Activated naive CD4-positive, alpha-beta T cell treated with anti-CD3 and anti-CD28 coated beads for 36 hours (primary cell): ENCODE measurements at regions of chr3 and their contacts with region 1.

Region 1: GRCh38 chr3:157088601-157089454 is 71.1 kb downstream of the CCNL1 start:
- DNase-seq: peak; percentile 94
- H3K4me3 Mint-ChIP-seq: peak overlapping the region; percentile 73
- H3K27ac Mint-ChIP-seq: peak overlapping the region; percentile 96
- H3K4me1 Mint-ChIP-seq: peaks cover 51% of the 10 kb centered on the region
- H3K27me3 Mint-ChIP-seq: peaks cover 4% of the 10 kb centered on the region

Region 2: GRCh38 chr3:156483961-156484787 is 604.7 kb before region 1 on chr3:
- CTCF ChIA-PET with region 1: no interaction called
- intact Hi-C with region 1: loop called (anchors 1 kb)
- DNase-seq: peak; percentile 70
- H3K4me3 Mint-ChIP-seq: peak overlapping the region; percentile 51
- H3K27ac Mint-ChIP-seq: peak overlapping the region; percentile 81
- H3K4me1 Mint-ChIP-seq: peaks cover 42% of the 10 kb centered on the region
- H3K27me3 Mint-ChIP-seq: no peaks in the 10 kb centered on the region

Region 3: GRCh38 chr3:156605686-156606605 is 482.9 kb before region 1 on chr3:
- CTCF ChIA-PET with region 1: no interaction called
- intact Hi-C with region 1: loop called (anchors 5 kb)
- DNase-seq: no peak
- H3K4me3 Mint-ChIP-seq: peak overlapping the region; percentile 68
- H3K27ac Mint-ChIP-seq: no peak overlapping the region
- H3K4me1 Mint-ChIP-seq: peaks cover 19% of the 10 kb centered on the region
- H3K27me3 Mint-ChIP-seq: peaks cover 31% of the 10 kb centered on the region

Region 4: GRCh38 chr3:156826144-156826895 is 262.5 kb before region 1 on chr3 and contains the start of gene LEKR1:
- CTCF ChIA-PET with region 1: no interaction called
- intact Hi-C with region 1: loop called (anchors 1 kb)
- DNase-seq: peak; percentile 69
- H3K4me3 Mint-ChIP-seq: peak within 1 kb of the TSS; percentile 93
- H3K27ac Mint-ChIP-seq: peak within 1 kb of the TSS; percentile 92
- H3K4me1 Mint-ChIP-seq: peaks cover 16% of the 10 kb centered on the region
- H3K27me3 Mint-ChIP-seq: no peaks in the 10 kb centered on the region
- total RNA-seq, gene LEKR1: 0.43 to 0.77 TPM

Region 5: GRCh38 chr3:157045238-157045850 is 43.5 kb before region 1 on chr3:
- CTCF ChIA-PET with region 1: no interaction called
- intact Hi-C with region 1: no loop called
- DNase-seq: no peak
- H3K4me3 Mint-ChIP-seq: no peak overlapping the region
- H3K27ac Mint-ChIP-seq: no peak overlapping the region
- H3K4me1 Mint-ChIP-seq: no peaks in the 10 kb centered on the region
- H3K27me3 Mint-ChIP-seq: peaks cover 6% of the 10 kb centered on the region

Region 6: GRCh38 chr3:157104928-157105652 is 16.3 kb after region 1 on chr3:
- CTCF ChIA-PET with region 1: interaction called, 12 read pairs
- intact Hi-C with region 1: loop called (anchors 1 kb)
- DNase-seq: no peak
- H3K4me3 Mint-ChIP-seq: no peak overlapping the region
- H3K27ac Mint-ChIP-seq: no peak overlapping the region
- H3K4me1 Mint-ChIP-seq: peaks cover 21% of the 10 kb centered on the region
- H3K27me3 Mint-ChIP-seq: no peaks in the 10 kb centered on the region

Region 7: DNA sequence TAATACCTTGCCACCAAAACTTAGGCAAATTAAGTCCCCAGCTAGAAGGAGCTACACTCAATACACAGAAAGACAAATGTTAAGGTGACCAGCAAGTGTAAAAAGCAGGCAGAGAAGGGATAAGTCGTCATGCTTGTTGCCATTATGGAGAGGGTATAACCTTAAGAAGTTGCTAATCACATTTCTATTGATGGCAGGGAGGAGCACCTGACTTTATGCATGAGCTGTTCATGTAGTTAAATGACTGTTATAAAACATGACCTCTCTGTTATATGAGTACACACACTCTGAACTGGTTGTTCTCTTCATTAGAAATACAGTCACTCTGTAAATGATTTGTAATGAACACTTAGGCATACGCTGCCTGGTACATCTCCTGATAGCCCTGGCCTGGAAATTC is 77.7 kb after region 1 on chr3:
- CTCF ChIA-PET with region 1: no interaction called
- intact Hi-C with region 1: no loop called
- DNase-seq: no peak
- H3K4me3 Mint-ChIP-seq: no peak overlapping the region
- H3K27ac Mint-ChIP-seq: no peak overlapping the region
- H3K4me1 Mint-ChIP-seq: peaks cover 17% of the 10 kb centered on the region
- H3K27me3 Mint-ChIP-seq: no peaks in the 10 kb centered on the region

Region 8: GRCh38 chr3:157226173-157226847 is 137.5 kb after region 1 on chr3:
- CTCF ChIA-PET with region 1: no interaction called
- intact Hi-C with region 1: no loop called
- DNase-seq: no peak
- H3K4me3 Mint-ChIP-seq: no peak overlapping the region
- H3K27ac Mint-ChIP-seq: no peak overlapping the region
- H3K4me1 Mint-ChIP-seq: peaks cover 7% of the 10 kb centered on the region
- H3K27me3 Mint-ChIP-seq: no peaks in the 10 kb centered on the region

Region 9: DNA sequence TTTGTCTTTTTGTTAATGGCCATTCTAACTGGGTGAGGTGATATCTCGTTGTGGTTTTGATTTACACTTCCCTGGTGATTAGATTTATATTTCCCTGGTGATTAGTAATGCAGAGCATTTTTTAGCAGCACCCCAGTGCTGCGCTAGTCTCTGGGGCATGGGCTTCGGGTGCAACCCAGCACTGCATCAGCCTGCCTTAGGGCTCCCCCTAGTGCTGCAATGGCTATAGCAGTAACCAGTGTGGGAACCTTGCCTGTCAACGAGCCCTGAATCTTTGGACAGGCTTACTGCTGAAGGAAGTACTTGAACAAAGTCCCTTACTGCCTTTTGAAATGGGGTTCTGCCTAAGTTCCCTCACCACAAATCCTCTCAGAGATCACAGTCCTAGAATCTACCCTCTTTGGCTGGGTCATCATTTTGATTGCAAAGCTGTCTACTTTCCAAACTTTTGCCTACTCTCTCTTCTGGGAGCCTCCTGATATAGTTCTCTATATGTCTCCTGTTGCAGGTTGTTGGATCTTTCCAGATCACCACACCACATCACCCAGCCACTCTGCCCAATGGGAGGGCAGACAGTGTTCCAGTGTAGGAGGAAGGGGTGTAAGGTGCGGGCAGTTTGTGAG is 150.4 kb after region 1 on chr3:
- CTCF ChIA-PET with region 1: no interaction called
- intact Hi-C with region 1: loop called (anchors 1 kb)
- DNase-seq: peak; percentile 88
- H3K4me3 Mint-ChIP-seq: no peak overlapping the region
- H3K27ac Mint-ChIP-seq: no peak overlapping the region
- H3K4me1 Mint-ChIP-seq: peaks cover 2% of the 10 kb centered on the region
- H3K27me3 Mint-ChIP-seq: no peaks in the 10 kb centered on the region